ENCODE measurements at regions of chr1 and their contacts with region 1.

Region 1: GRCh38 chr1:109112652-109113285 is 1.1 kb upstream of the ELAPOR1 start:
- DNase-seq: peak; percentile 89 to 96 (median 94)
- H3K4me3 ChIP-seq: peak overlapping the region in 58 of 59 donors; percentile 21 to 80 (median 65)
- H3K27ac ChIP-seq: peak overlapping the region in 50 of 59 donors; percentile 7 to 88 (median 61)
- H3K27me3 ChIP-seq: no peaks in the 10 kb centered on the region
- CTCF ChIP-seq: peak; percentile 90 to 100 (median 96)

Region 2: DNA sequence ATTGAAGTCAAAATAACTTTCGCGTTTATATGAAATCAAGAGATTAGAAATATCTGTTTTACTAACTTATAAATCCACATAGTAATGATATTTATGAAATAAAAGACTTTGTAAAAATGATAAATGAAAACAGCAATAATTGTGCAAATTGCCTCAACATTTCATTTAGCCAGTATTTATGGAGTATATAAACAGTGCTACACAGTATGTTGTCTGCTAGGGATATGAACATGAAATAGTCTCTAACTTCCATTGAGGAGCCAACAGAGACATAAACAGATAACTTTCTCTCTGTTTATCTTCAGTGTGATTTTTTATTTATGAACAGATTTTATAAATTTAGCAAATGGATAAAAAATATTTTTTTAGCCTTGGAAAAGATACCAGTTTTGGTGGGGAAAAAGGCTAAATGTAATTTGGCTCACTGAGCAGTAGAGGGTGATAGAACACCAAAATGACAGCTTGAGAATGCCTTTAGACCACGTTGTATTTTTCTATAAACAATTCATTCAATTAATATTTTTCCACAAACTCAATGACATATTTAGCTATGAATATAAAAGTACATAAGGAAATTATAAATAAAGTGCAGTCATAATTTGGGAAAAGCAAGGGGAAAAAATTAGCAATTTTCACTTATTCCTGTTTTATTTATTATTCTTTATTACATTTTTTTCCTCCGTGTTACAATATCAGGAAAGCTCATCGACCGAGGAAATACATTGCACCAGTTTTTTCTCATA is 600.4 kb before region 1 on chr1:
- intact Hi-C with region 1: loop called in 1 of 2 experiments (anchors 5 kb)
- DNase-seq: no peak
- H3K4me3 ChIP-seq: peak overlapping the region in 4 of 59 donors; percentile 2 to 22 (median 10)
- H3K27ac ChIP-seq: no peak overlapping the region
- H3K27me3 ChIP-seq: no peaks in the 10 kb centered on the region
- CTCF ChIP-seq: peak; percentile 57 to 95 (median 86)

Region 3: GRCh38 chr1:109137964-109138741 is 25.4 kb after region 1 on chr1:
- intact Hi-C with region 1: no loop called
- DNase-seq: no peak
- H3K4me3 ChIP-seq: no peak overlapping the region
- H3K27ac ChIP-seq: no peak overlapping the region
- H3K27me3 ChIP-seq: no peaks in the 10 kb centered on the region
- CTCF ChIP-seq: no peak

Region 4: GRCh38 chr1:109151164-109151990 is 38.6 kb after region 1 on chr1:
- intact Hi-C with region 1: loop called in 1 of 2 experiments (anchors 5 kb)
- DNase-seq: peak; percentile 8 to 79 (median 68)
- H3K4me3 ChIP-seq: no peak overlapping the region
- H3K27ac ChIP-seq: peak overlapping the region in 58 of 59 donors; percentile 3 to 94 (median 78)
- H3K27me3 ChIP-seq: no peaks in the 10 kb centered on the region
- CTCF ChIP-seq: no peak

Region 5: DNA sequence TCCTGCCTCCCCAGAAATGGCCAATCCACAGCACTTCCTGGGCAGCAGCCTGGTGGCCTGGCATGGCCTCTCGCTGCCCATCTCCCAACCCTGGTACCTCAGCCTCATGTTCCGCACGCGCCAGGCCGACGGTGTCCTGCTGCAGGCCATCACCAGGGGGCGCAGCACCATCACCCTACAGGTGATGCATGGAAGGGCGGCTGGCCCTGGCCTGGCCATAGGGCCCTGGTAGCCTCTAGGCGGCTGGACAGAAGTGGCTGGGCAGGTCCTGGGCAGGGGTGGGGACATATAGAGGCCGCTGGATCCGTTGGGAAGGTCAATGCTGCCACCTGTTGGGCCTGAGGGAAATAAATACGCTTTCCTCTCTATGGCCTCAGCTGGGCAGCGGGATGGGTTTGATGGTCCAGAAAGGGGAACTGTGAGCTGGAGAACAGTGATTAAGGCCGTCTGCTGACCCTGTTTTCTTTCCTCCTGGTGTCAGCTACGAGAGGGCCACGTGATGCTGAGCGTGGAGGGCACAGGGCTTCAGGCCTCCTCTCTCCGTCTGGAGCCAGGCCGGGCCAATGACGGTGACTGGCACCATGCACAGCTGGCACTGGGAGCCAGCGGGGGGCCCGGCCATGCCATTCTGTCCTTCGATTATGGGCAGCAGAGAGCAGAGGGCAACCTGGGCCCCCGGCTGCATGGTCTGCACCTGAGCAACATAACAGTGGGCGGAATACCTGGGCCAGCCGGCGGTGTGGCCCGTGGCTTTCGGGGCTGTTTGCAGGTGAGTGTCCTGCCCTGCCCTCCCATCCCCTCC is 151.0 kb after region 1 on chr1:
- intact Hi-C with region 1: loop called (anchors 1 to 10 kb)
- DNase-seq: peak; percentile 38 to 90 (median 82)
- H3K4me3 ChIP-seq: peak overlapping the region in 40 of 59 donors; percentile 0 to 57 (median 28)
- H3K27ac ChIP-seq: peak overlapping the region; percentile 71 to 100 (median 93)
- H3K27me3 ChIP-seq: no peaks in the 10 kb centered on the region
- CTCF ChIP-seq: peak; percentile 58 to 98 (median 92)

Region 6: GRCh38 chr1:109509176-109510134 is 396.7 kb after region 1 on chr1 and contains the start of gene AMIGO1:
- intact Hi-C with region 1: loop called in 1 of 2 experiments (anchors 10 kb)
- DNase-seq: peak in 5 of 10 donors; percentile 46 to 60 (median 54)
- H3K4me3 ChIP-seq: peak within 1 kb of the TSS; percentile 65 to 93 (median 77)
- H3K27ac ChIP-seq: peak within 1 kb of the TSS in 50 of 59 donors; percentile 9 to 91 (median 68)
- H3K27me3 ChIP-seq: no peaks in the 10 kb centered on the region
- CTCF ChIP-seq: peak in 1 of 56 donors; percentile 18
- total RNA-seq, gene AMIGO1: 18.0 to 60.3 (median 44.1) TPM

Region 7: DNA sequence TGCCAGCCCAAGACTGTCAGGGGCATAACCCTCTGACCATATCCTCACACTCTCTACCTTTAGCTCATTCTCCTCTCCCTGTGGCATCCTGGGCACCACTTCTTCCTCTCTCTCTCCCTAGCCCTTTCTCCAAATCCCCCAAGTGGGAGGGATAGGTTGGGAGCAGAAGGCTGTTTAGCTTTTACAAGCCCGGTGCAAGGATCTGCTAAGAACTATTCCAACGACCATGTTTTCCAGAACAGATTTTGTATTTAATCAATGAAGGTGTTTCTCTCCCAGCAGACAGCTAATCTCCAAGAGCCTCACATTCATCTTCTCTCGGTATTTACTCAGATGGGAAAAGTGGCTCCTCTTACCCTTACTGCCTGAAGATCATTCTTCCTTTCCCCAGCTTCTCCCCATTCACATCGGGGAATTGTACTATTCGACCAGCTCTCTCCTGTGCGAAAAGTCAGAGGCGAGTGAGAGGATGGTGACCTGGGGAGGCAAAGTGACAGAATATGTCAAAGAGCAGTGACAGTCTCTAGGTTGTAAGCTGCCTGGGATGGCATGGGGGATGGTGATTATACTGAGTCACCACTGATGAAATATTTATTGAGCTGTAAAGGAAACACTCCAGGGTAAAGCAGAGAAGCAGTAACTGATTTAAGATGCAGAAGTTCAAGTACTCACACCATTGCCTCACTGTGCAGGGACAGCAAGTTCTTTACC is 1179.4 kb after region 1 on chr1:
- intact Hi-C with region 1: no loop called
- DNase-seq: no peak
- H3K4me3 ChIP-seq: no peak overlapping the region
- H3K27ac ChIP-seq: no peak overlapping the region
- H3K27me3 ChIP-seq: no peaks in the 10 kb centered on the region
- CTCF ChIP-seq: no peak